WTC11 (cell line): ENCODE measurements at regions of chr17 and their contacts with region 1.

Region 1: DNA sequence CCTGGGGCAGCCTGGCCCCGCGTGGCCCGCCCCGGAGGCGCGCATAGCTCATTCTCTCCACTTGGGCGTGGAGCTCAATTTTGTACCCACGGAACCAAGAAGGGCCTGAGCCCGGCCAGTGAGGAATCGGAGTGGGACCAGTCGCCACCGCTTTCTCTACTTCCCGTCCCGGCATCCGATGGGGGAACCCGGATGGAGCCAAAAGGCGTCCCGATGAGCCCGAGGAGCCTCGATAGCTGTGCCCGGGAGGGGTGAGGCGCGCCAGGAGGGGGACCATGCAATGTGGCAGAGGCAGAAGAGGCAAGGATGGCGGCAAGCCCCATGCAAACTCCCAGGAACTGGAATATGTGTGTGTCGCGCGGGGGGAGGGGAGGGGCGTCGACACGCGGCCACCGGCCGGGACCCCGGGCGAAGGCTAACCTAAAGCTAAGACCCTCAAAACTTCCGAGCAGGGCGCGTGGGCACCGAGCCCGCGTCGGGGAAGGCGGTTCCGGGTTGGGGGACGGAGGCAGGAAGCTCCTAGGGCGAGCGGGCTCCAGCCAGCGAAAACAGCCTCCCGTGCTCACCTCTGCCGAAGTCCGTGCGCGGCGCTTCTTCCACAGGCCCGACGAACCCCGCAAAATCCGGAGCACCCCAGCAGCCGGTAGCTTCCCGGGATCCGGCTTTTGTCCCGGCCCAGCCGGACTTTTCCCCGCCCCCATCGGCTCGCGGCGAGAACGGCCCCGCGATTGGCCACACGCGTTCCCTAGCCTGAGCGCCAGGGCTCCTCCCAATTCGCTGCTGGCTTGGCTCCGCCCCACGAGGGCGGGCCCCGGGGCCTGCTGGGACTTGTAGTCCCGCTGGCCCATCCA is at the start of gene ACLY:
- DNase-seq: peak; percentile 99
- ATAC-seq: peak; percentile 89
- H3K4me3 Mint-ChIP-seq: peak within 1 kb of the TSS; percentile 84
- H3K27ac Mint-ChIP-seq: peak within 1 kb of the TSS; percentile 96
- H3K4me1 Mint-ChIP-seq: peaks cover 51% of the 10 kb centered on the region
- H3K27me3 Mint-ChIP-seq: no peaks in the 10 kb centered on the region
- CTCF ChIP-seq: no peak
- total RNA-seq, gene ACLY: 312 to 350 TPM (median 316 TPM) in 3 replicates

Region 2: DNA sequence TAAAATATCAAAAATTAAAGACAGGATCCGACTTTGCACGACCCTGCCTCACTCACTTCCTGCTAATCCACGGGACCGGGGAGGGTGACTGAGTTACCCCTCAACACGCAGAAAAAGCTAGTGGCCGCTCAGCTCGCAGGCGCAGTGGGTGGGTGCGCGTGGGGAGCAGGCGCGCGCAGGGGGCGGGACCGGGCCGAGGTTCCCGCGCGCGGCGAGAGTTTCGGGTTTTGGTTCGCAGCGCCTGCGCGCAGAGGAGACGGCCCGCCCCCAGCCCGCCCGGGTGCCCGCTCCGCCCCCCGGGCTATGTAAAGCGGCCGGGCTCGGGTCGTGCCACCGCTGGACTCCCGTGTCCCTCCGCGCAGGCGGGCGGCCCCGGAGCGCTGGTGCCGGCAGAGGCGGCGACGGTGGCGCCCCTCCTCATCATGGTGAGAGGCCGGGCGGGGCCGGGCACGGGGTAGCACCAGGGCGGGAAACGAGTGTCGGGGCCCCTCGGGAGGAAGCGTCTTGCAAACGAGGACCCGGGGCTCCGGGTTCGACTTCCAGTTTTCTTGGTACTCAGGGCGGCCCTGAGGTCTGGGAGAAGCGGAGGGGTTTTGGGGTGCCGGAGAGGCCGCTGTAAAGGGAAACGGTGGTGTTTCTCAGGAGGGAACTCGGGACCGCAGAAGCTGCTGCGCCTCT is 48.1 kb after region 1 on chr17 and contains the start of gene CNP:
- CTCF ChIA-PET with region 1: interaction called, 134 read pairs
- POLR2A ChIA-PET with region 1: interaction called, 3 read pairs
- DNase-seq: peak; percentile 85
- ATAC-seq: peak; percentile 27
- H3K4me3 Mint-ChIP-seq: peak within 1 kb of the TSS; percentile 84
- H3K27ac Mint-ChIP-seq: peak within 1 kb of the TSS; percentile 94
- H3K4me1 Mint-ChIP-seq: peaks cover 18% of the 10 kb centered on the region
- H3K27me3 Mint-ChIP-seq: peaks cover 9% of the 10 kb centered on the region
- CTCF ChIP-seq: no peak
- total RNA-seq, gene CNP: 52.5 to 54.2 TPM (median 53.9 TPM) in 3 replicates